Right ventricle myocardium inferior (tissue), 1 donor: ENCODE measurements at regions of chr3 and their contacts with region 1.

Region 1: GRCh38 chr3:17431004-17431403 is 311.4 kb downstream of the TBC1D5 start:
- DNase-seq: no peak
- ATAC-seq: no peak

Region 2: DNA sequence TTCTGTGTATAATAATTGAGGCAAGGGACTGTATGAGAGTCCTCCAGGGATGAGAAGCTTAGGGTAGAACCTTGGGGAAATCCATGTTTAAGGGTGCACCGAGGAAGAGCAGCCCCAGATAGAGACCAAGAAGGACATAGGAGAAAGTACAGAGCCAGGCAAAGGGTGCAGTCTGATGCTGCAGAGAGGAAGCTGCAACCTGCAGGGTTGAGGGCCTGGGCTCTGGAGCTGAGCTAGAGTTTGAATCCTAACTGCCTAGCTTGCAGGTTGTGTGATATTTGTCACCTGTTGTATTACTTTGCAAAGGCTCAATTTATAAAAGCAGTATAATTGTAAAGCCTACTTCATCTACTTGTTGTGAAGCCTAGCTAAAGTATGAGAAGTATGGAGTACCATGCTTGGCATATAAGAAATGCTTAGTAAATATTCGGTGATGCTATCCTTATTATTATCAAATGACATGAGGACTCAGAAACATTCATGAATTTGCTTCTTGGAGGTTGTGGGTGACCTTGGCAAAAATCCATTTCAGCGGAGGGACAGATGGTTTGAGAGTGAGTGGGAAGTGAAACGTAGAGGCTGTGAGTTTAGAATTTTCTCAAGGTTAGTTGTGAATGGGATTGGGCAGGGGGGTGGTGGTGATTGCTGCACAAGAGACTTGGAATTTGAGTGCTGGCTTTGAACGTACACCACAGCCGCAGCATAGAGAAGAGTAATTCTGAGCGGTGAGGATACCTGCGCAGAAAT is 502.4 kb before region 1 on chr3:
- intact Hi-C with region 1: no loop called
- DNase-seq: no peak
- ATAC-seq: no peak

Region 3: DNA sequence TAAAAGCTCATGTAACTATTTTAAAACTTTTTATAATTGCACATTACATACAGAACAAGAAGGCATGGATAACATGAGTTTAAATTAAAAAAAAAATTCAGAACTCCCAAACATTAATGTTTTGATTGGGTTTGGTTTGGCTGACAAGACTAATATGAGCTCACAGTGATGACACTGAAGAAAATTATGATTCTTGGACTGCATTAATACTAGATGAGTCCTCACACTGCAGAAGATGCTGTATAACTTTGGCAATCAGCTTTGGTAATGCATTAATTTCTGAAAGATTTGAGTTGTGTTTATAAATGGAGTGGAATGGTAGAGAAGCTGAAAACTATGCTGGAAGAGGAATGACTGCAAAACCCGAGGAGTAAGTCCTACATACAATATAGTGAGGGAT is 187.4 kb before region 1 on chr3:
- intact Hi-C with region 1: no loop called
- DNase-seq: no peak
- ATAC-seq: no peak

Region 4: DNA sequence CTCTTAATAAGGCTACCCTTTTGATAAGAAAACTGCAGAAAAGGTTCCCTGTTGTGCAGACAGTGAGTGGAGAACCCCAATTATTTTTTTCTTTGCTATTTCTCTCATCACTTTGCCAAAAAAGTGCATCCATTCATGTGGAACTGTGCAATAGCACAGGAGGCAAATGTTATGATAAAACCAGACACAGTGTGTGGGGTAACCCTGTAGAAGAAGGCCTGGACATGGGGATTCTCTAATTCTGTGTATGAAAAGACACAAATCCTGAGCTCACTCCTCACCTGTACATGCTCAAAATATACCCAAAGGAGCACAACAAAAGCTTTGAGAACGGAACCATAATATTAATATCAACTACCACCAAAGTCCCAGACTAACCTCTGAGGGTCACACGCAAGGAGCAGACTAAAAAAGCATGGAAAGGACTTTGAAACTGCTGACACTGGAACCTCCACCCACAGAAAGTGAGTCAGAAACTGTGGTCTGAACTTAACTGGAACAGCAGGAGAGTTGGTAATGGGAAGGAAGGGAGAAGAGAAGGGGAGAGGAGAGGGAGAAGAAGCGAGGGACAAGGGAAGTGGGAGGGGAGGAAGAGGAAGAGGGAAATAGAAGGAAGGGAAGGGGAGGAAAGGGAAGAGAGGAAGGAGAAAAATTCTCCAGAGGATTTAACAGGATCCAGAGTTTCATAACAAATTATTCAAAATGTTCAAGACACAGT is 11.5 kb after region 1 on chr3:
- intact Hi-C with region 1: loop called (anchors 1 kb)
- DNase-seq: no peak
- ATAC-seq: no peak

Region 5: GRCh38 chr3:17514597-17514996 is 83.6 kb after region 1 on chr3:
- intact Hi-C with region 1: no loop called
- DNase-seq: no peak
- ATAC-seq: no peak

Region 6: DNA sequence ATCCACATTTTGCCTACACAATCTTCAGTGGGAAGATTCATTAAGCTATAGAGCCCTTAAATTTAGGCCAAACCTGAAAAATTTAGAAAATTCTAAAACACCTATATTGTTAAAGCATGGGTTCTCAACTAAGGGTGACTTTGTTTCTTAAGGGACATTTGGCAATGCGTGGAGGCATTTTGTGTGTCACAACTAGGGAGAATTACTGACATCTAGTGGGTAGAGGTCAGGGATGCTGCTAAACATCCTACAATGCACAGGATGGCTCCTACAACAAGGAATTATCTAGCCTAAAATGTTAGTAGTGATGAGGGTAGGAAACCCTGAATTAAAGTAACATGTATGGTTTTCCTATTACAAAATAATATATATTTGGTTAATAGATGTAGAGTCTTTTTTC is 255.6 kb after region 1 on chr3:
- intact Hi-C with region 1: loop called (anchors 5 kb)
- DNase-seq: no peak
- ATAC-seq: peak; percentile 79

Region 7: GRCh38 chr3:17841190-17841828 is 410.3 kb after region 1 on chr3:
- intact Hi-C with region 1: loop called (anchors 2 kb)
- DNase-seq: peak; percentile 79
- ATAC-seq: peak; percentile 78